Psoas muscle (tissue), 8 donors: ENCODE measurements at regions of chrX and their contacts with region 1.

Region 1: GRCh38 chrX:10119399-10119990 is 37.3 kb upstream of the CLCN4 start:
- DNase-seq: no peak
- ATAC-seq: peak; percentile 92 to 96 (median 92)
- H3K4me3 ChIP-seq: no peak overlapping the region
- H3K27ac ChIP-seq: no peak overlapping the region
- H3K4me1 ChIP-seq: no peaks in the 10 kb centered on the region
- H3K27me3 ChIP-seq: no peaks in the 10 kb centered on the region
- CTCF ChIP-seq: peak; percentile 100

Region 2: GRCh38 chrX:9885150-9885549 is 234.3 kb before region 1 on chrX:
- intact Hi-C with region 1: loop called in 1 of 2 experiments (anchors 5 kb)
- DNase-seq: peak; percentile 34 to 64
- ATAC-seq: peak in 3 of 4 donors; percentile 54 to 72 (median 55)
- H3K4me3 ChIP-seq: no peak overlapping the region
- H3K27ac ChIP-seq: no peak overlapping the region
- H3K4me1 ChIP-seq: no peaks in the 10 kb centered on the region
- H3K27me3 ChIP-seq: peaks cover 0 to 14% (median 0%) of the 10 kb centered on the region in 3 donors
- CTCF ChIP-seq: peak; percentile 43

Region 3: GRCh38 chrX:9995855-9996339 is 123.6 kb before region 1 on chrX:
- intact Hi-C with region 1: loop called (anchors 1 to 2 kb)
- DNase-seq: peak; percentile 83 to 91
- ATAC-seq: peak; percentile 94 to 99 (median 96)
- H3K4me3 ChIP-seq: no peak overlapping the region
- H3K27ac ChIP-seq: no peak overlapping the region
- H3K4me1 ChIP-seq: no peaks in the 10 kb centered on the region
- H3K27me3 ChIP-seq: no peaks in the 10 kb centered on the region
- CTCF ChIP-seq: peak; percentile 96

Region 4: GRCh38 chrX:10014462-10015356 is 104.8 kb before region 1 on chrX:
- intact Hi-C with region 1: loop called in 1 of 2 experiments (anchors 5 kb)
- DNase-seq: peak; percentile 88 to 92
- ATAC-seq: peak; percentile 93 to 95 (median 94)
- H3K4me3 ChIP-seq: peak overlapping the region; percentile 67
- H3K27ac ChIP-seq: peak overlapping the region; percentile 69
- H3K4me1 ChIP-seq: peaks cover 4% of the 10 kb centered on the region
- H3K27me3 ChIP-seq: no peaks in the 10 kb centered on the region
- CTCF ChIP-seq: no peak

Region 5: DNA sequence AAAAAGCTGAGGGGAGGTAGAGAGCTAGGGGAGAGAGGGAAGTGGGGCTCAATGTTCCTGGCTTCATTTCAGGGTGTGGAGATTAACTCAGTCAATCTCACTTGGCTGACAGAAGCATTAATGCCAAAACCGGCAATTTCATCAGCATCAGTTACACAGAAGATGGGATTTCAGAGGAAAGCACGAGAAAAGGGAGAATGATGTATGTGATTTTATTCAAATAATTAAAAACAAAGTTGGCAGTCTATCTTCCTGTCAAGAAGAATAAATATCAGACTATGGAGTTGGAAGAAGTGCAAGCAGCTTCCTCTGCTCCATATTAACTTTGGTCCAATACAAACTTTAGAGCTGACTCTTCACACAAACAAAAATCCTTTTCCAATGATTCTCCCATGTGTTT is 962.0 kb after region 1 on chrX:
- intact Hi-C with region 1: no loop called
- DNase-seq: no peak
- ATAC-seq: no peak
- H3K4me3 ChIP-seq: no peak overlapping the region
- H3K27ac ChIP-seq: no peak overlapping the region
- H3K4me1 ChIP-seq: no peaks in the 10 kb centered on the region
- H3K27me3 ChIP-seq: no peaks in the 10 kb centered on the region
- CTCF ChIP-seq: no peak